ENCODE measurements at regions of chr7 and their contacts with region 1.

Region 1: DNA sequence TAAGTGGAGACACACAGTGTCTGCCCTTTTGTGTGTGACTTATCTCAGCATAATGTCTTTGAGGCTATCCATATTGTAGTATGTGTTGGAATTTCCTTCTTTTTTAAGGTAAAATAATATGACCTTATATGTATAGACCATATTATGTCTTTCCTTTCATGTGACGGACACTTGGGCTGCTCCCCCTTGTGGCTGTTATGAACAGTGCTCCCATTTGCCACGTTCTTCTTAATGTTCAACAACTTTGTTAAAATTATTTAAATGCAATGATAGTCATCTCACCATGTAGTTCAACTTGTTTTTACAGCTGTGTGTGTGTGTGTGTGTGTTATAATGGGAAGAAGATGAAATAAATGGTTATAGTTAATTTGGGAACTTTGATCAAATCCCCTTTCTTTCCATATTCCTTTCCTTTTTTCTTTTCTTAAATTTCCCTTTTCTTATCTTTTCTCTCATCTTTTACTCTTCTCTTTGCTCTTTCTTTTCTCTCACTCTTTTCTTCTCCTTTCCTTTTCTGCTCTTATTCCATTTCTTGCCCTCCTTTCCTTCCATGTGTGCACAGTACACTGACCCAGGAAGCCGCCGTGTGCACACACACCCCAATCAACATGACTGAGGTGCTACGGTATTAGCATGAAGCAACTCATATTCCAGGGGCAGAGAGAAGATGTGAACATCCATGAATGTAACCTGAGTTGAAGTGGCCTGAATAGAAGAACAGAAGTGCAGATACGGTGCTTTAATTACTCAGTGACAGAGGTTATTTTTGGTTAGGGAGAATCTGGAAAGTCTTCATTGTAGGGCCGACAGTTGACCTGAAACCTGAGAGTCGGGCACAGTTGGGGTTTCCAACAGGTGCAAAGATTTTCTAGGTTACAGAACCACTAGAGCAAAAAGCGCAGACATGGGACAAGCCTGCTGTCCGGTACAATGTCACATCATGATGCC is 596.7 kb downstream of the SDK1 start:
- DNase-seq: no peak
- H3K4me3 ChIP-seq: no peak overlapping the region
- H3K27ac ChIP-seq: no peak overlapping the region
- H3K4me1 ChIP-seq: peaks cover 0 to 13% (median 4%) of the 10 kb centered on the region in 4 donors
- H3K27me3 ChIP-seq: no peaks in the 10 kb centered on the region
- CTCF ChIP-seq: peak; percentile 23 to 80 (median 70)
- EP300 ChIP-seq: no peak
- POLR2A ChIP-seq: no peak

Region 2: DNA sequence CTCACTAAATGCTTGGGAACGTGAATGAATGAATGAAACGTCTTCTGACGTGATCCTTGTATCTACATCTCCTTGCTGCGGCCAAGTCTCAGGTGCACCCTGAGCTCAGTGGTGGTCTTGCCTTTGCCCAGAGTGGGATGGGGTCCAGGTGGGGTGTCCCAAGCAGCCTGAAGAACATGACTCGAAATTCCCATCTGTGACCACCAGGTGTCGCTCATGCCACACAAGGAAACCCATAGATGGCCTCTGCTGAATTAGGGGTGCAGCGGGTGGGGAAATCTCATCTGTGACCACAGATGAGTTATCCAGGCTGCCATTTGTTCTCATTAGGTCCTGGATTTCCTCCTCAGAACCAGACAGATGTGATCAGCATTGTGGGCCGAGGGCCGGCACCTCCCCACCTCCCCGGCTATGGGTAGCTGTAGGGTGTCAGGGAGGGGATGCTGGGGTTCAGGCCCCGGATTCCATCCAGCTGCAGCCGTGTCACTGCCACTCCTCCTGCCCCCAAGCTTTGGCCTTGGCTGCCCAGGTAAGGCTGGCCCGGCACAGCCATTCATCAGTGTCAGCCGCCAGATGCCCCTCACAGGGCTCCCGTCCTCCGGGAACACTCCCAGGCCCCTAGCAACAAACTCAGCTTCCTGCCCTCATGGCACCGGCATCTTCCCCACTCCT is 1032.6 kb before region 1 on chr7:
- intact Hi-C with region 1: loop called (anchors 5 kb)
- DNase-seq: peak; percentile 85
- H3K4me3 ChIP-seq: no peak overlapping the region
- H3K27ac ChIP-seq: no peak overlapping the region
- H3K4me1 ChIP-seq: peaks cover 0 to 20% (median 17%) of the 10 kb centered on the region in 4 donors
- H3K27me3 ChIP-seq: no peaks in the 10 kb centered on the region
- CTCF ChIP-seq: peak; percentile 76 to 95 (median 88)
- EP300 ChIP-seq: no peak
- POLR2A ChIP-seq: no peak

Region 3: DNA sequence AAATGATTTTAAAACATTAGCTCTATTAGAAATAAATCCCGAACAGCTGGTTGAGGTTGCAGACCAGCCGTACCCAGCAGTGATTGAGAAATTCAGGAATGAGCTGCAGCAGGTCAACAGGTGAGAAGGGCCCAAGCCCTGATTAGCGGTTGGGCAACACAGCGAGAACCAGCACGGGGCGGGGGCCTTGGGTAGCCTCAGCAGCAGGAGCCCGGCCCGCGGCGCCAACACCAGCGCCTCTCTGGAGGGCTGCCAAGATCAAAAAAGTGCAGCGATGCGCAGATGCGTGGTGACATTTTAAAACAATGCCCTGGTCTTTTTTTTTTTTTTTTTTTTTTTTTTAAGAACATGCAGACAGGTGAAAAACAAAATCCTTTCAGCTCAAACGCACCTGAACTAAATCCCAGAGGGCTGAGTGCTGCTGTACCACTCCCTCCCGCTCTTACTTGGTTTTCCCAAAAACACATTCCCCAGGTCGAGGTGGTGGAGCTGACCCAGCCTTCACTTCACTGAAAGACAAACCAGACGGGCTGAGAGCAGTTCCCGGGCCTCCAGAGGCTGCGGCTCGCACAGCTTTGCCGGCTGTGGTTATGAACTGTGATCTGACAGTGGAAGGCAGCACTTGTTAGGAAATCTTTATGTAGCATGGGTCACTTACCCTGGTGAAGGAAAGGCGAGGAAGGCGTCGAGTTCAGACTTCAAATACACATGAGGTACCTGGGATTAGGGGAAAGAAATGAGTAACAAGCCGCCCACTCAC is 17.3 kb before region 1 on chr7:
- intact Hi-C with region 1: no loop called
- DNase-seq: no peak
- H3K4me3 ChIP-seq: no peak overlapping the region
- H3K27ac ChIP-seq: no peak overlapping the region
- H3K4me1 ChIP-seq: no peaks in the 10 kb centered on the region
- H3K27me3 ChIP-seq: no peaks in the 10 kb centered on the region
- CTCF ChIP-seq: no peak
- EP300 ChIP-seq: no peak
- POLR2A ChIP-seq: no peak

Region 4: GRCh38 chr7:4080006-4080405 is 182.3 kb after region 1 on chr7:
- intact Hi-C with region 1: no loop called
- DNase-seq: no peak
- H3K4me3 ChIP-seq: no peak overlapping the region
- H3K27ac ChIP-seq: no peak overlapping the region
- H3K4me1 ChIP-seq: no peaks in the 10 kb centered on the region
- H3K27me3 ChIP-seq: no peaks in the 10 kb centered on the region
- CTCF ChIP-seq: no peak
- EP300 ChIP-seq: no peak
- POLR2A ChIP-seq: no peak